ENCODE measurements at regions of chr4 and their contacts with region 1.

Region 1: DNA sequence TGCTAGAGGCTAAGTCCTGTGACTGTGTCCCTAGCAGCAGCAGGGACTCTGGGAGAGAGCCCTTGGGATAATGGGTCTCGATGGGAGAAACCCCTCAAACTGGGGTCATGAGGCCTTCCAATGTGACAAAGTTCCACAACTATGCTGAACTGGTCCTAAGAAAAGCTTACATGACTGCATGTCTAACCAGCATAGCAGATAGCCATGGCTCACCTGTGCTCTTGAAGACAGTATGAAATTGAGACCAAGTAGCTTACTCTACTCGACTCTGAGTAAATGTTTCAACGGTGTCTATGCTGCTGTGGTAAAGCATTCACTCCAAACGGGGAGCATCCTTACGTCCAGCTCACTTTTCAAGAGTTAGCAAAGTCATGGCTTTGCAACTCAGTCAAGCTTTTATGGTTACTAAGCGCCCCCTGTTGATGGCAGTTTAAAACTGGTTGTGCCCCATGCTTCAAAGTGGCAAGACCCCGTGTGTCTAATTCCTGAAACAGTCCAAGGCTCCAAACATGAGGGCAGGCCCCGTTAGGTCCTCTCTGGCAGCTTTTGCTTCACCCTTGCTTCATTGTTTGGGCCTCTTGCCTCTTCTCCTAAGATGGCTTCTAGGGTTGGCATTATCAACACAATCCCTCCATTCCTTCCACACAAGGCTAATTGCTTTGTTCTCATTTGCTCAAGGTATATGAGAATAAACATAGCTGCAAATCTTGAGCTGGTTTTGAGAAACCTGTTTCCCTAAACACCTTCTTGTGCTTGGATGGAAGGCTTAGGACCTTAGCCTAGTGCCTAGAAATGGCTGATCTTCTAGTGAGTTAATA is 46.6 kb downstream of the CCNG2 start:
- DNase-seq: peak; percentile 72
- ATAC-seq: peak; percentile 97
- H3K4me3 Mint-ChIP-seq: no peak overlapping the region
- H3K27ac Mint-ChIP-seq: no peak overlapping the region
- H3K4me1 Mint-ChIP-seq: no peaks in the 10 kb centered on the region
- H3K27me3 Mint-ChIP-seq: peaks cover 15% of the 10 kb centered on the region
- CTCF ChIP-seq: peak; percentile 60

Region 2: GRCh38 chr4:76634239-76634638 is 569.4 kb before region 1 on chr4:
- CTCF ChIA-PET with region 1: no interaction called
- POLR2A ChIA-PET with region 1: no interaction called
- DNase-seq: no peak
- ATAC-seq: 0 out of 2 replicates have a peak, but pooled peaks have one; percentile 41
- H3K4me3 Mint-ChIP-seq: no peak overlapping the region
- H3K27ac Mint-ChIP-seq: 0 out of 2 replicates have a peak overlapping the region, but pooled peaks have one; percentile 23
- H3K4me1 Mint-ChIP-seq: peaks cover 24% of the 10 kb centered on the region
- H3K27me3 Mint-ChIP-seq: peaks cover 2% of the 10 kb centered on the region; the same call in 1 of the 2 replicates
- CTCF ChIP-seq: no peak

Region 3: DNA sequence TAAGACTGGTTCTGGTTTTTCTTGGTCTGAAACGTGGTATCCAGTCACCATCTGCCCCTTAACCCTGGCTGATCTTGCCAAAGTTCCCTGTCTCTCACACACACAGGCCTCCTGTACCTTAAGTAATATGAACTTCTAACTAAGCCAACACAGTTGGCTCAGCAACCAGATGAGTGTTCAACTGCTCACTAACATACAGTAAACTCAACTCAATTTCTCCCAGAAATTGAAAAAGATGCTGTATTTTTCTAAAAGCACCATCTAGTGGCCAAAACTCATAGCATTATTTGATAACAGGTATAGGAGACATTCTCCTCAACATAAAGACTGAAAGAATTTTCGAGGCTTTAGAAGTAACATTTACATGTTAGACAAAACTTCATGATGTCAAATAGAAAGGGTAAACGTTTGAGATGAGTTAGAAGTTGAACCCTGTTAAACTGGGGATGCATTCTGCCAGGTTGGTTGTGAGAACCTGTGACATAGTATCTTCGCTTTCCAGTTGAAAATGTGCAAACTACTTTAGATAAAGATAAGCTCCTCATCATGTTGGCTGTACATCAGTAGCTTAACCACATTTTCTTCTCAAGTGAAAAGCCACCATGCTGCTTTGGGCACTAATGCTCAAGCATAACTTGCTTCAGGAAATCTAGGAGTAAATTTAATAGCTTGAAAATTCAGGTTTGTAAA is 159.0 kb before region 1 on chr4:
- CTCF ChIA-PET with region 1: interaction called, 92 read pairs
- POLR2A ChIA-PET with region 1: interaction called, 5 read pairs
- DNase-seq: no peak
- ATAC-seq: no peak
- H3K4me3 Mint-ChIP-seq: no peak overlapping the region
- H3K27ac Mint-ChIP-seq: no peak overlapping the region
- H3K4me1 Mint-ChIP-seq: peaks cover 13% of the 10 kb centered on the region
- H3K27me3 Mint-ChIP-seq: no peaks in the 10 kb centered on the region
- CTCF ChIP-seq: no peak

Region 4: DNA sequence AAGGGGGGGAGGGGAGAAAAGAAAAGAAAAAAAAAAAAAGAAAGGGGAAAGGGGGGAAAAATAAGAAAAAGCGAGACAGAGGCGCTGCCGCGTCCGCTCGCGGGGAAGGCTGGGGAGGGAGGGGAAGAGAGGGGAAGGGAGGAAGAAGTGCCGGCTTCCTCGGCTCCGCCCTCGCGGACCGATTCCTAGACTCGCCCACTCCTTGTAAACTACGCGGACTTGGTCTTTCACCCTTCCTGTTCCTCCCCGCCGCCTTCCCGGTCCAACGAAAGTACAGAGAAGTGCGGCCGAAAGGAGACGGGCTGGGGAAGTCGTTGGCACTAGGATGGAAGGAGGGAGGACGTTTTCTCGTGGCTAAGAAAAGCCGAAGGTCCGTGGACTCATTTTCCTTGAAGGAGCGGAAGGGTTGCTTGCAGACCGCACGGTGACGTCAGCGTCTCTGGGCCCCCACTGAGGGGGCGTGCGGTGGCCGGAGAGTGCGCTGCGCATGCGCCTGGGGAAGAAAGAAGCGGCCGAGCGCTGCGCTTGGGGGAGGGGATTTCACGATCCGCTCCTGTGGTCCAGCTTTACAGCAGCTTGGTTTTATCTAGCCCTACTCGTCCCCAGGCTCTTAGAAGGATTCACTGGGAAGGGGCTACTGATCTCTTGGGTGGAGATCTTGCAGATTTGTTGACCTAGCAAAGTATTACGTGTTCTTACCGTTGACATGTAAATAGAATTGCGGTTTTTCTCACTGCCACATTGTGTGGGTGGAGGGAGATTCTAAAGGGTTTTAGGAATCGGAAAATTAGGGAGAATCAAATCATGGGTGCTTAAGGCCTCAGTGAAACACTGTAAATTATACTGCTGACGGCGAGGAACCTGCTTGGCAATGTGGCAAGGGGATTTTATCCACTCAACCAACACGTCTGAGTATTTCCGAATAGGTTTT is 127.5 kb before region 1 on chr4 and contains the start of gene CCNI:
- CTCF ChIA-PET with region 1: interaction called, 14 read pairs
- POLR2A ChIA-PET with region 1: no interaction called
- DNase-seq: peak; percentile 97
- ATAC-seq: peak; percentile 84
- H3K4me3 Mint-ChIP-seq: peak within 1 kb of the TSS; percentile 96
- H3K27ac Mint-ChIP-seq: peak within 1 kb of the TSS; percentile 100
- H3K4me1 Mint-ChIP-seq: peaks cover 28% of the 10 kb centered on the region
- H3K27me3 Mint-ChIP-seq: no peaks in the 10 kb centered on the region
- CTCF ChIP-seq: no peak
- total RNA-seq, gene CCNI: 213 to 253 TPM (median 248 TPM) in 3 replicates

Region 5: DNA sequence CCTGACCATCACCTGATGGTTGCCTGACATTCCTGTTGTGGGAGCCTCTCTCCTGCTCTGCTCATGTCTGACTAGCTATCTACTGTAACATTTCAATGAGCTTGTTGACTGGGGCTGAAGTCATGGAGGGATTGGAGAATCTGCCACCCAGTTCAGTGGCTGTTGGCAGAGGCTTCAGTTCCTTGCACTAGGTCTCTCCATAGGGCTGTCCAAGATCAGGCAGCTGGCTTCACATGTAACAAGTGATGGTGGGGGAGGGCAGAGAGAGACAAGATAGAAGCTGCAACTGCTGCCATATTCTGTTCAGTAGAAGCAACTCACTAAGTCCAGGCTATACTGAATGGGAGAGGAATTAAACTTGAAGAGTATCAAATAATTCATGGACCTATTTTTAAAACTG is 113.7 kb before region 1 on chr4:
- CTCF ChIA-PET with region 1: interaction called, 56 read pairs
- POLR2A ChIA-PET with region 1: no interaction called
- DNase-seq: no peak
- ATAC-seq: no peak
- H3K4me3 Mint-ChIP-seq: no peak overlapping the region
- H3K27ac Mint-ChIP-seq: no peak overlapping the region
- H3K4me1 Mint-ChIP-seq: no peaks in the 10 kb centered on the region
- H3K27me3 Mint-ChIP-seq: 0 out of 2 replicates have a peak, but pooled peaks cover 2% of the 10 kb centered on the region
- CTCF ChIP-seq: no peak

Region 6: GRCh38 chr4:77120886-77121508 is 82.6 kb before region 1 on chr4:
- CTCF ChIA-PET with region 1: interaction called, 34 read pairs
- POLR2A ChIA-PET with region 1: no interaction called
- DNase-seq: no peak
- ATAC-seq: peak; percentile 90
- H3K4me3 Mint-ChIP-seq: no peak overlapping the region
- H3K27ac Mint-ChIP-seq: no peak overlapping the region
- H3K4me1 Mint-ChIP-seq: peaks cover 33% of the 10 kb centered on the region
- H3K27me3 Mint-ChIP-seq: peaks cover 3% of the 10 kb centered on the region
- CTCF ChIP-seq: no peak

Region 7: GRCh38 chr4:77174426-77174825 is 29.2 kb before region 1 on chr4:
- CTCF ChIA-PET with region 1: interaction called, 29 read pairs
- POLR2A ChIA-PET with region 1: no interaction called
- DNase-seq: no peak
- ATAC-seq: no peak
- H3K4me3 Mint-ChIP-seq: no peak overlapping the region
- H3K27ac Mint-ChIP-seq: no peak overlapping the region
- H3K4me1 Mint-ChIP-seq: peaks cover 33% of the 10 kb centered on the region
- H3K27me3 Mint-ChIP-seq: peaks cover 77% of the 10 kb centered on the region
- CTCF ChIP-seq: no peak

Region 8: GRCh38 chr4:77697860-77698590 is 494.4 kb after region 1 on chr4:
- CTCF ChIA-PET with region 1: no interaction called
- POLR2A ChIA-PET with region 1: no interaction called
- DNase-seq: peak; percentile 28
- ATAC-seq: peak; percentile 81
- H3K4me3 Mint-ChIP-seq: no peak overlapping the region
- H3K27ac Mint-ChIP-seq: no peak overlapping the region
- H3K4me1 Mint-ChIP-seq: peaks cover 13% of the 10 kb centered on the region; the same call in 1 of the 2 replicates
- H3K27me3 Mint-ChIP-seq: no peaks in the 10 kb centered on the region
- CTCF ChIP-seq: no peak